Right ventricle myocardium inferior (tissue), 1 donor: ENCODE measurements at regions of chr17 and their contacts with region 1.

Region 1: GRCh38 chr17:7856883-7857723 is at the start of gene NAA38:
- DNase-seq: peak; percentile 97
- ATAC-seq: peak; percentile 91
- total RNA-seq, gene NAA38: 105 TPM

Region 2: GRCh38 chr17:7239091-7240027 is 617.7 kb before region 1 on chr17 and contains the start of gene PHF23:
- intact Hi-C with region 1: loop called (anchors 5 kb)
- DNase-seq: peak; percentile 100
- ATAC-seq: peak; percentile 85
- total RNA-seq, gene PHF23: 23.3 TPM

Region 3: DNA sequence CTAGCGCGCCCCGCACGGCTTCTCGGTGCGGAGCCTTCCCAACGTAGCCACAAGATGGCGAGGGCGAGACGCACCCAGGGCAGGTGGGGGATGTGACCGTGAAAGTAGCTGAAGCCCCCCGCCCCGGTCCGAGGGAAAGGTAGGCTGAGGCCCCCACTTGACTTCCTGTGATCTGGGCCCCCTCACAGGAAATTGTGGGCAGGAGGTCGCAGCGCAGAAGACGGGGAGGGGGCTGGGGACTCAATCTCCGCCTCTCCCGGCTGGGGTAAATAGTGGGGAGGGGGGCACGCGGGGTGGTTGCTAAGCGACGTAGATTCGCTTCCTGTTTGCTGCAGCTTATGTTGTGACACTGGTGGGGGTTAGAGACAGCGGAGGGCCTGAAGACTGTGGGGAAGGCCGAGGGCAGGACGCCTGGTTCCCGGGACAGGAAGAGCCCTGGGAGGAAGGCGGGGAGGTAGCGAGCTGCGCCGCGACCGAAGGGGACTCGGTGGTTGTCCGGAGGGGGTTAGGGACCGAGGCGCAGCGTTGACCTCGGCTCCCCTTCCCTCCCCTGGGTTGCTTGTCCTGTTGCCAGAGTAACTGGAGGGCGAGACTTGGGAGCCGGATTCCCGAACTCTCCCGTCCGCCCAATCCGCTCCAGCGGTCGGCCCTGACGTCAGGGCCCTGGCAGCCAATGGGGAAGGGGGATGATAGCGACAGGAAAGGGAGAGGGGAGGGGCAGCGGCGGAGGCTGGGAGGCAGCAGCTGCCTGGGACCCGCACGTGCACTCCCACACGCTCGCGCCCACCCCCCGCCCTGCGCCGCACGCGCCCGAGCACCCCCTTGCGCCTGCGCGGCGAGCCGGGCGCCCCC is 21.9 kb before region 1 on chr17:
- intact Hi-C with region 1: loop called (anchors 1 kb)
- DNase-seq: peak; percentile 99
- ATAC-seq: peak; percentile 77

Region 4: DNA sequence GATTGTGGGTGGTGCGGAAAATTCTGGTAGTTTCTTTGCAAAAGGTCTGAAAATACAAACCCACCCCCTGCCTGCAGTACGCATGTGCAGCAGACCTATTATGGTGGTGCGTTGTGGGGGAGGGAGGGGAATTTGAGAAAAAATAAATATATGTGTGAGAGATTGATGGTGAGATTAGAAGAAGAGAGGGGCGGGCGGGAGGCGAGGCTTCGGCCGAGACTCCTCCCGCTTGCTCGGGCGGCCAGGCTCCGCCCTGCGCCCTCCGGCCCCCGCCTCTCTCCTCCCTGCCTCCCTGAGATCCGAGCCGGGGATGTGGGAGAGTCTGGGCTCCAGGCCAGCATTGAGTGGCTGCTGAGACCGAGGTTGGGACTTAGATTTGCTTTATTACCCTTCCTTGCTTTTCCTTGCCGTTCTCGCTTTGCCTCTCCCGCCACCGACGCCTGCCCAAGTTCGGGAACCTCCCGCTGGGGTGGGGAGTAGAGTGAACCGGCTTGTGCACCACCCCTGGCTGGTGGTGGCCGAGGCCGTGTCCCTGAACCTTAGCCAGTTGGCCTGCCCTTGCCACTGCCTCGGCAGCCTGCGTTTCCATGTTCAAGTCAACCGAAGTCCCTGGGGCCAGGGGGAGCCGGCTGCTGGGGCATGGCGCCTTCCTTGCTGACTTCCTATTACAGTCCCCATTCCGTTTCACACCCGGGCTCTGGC is 30.5 kb after region 1 on chr17:
- intact Hi-C with region 1: loop called (anchors 2 kb)
- DNase-seq: peak; percentile 94
- ATAC-seq: peak; percentile 88

Region 5: GRCh38 chr17:8073627-8074484 is 216.8 kb after region 1 on chr17:
- intact Hi-C with region 1: no loop called
- DNase-seq: peak; percentile 87
- ATAC-seq: peak; percentile 59

Region 6: DNA sequence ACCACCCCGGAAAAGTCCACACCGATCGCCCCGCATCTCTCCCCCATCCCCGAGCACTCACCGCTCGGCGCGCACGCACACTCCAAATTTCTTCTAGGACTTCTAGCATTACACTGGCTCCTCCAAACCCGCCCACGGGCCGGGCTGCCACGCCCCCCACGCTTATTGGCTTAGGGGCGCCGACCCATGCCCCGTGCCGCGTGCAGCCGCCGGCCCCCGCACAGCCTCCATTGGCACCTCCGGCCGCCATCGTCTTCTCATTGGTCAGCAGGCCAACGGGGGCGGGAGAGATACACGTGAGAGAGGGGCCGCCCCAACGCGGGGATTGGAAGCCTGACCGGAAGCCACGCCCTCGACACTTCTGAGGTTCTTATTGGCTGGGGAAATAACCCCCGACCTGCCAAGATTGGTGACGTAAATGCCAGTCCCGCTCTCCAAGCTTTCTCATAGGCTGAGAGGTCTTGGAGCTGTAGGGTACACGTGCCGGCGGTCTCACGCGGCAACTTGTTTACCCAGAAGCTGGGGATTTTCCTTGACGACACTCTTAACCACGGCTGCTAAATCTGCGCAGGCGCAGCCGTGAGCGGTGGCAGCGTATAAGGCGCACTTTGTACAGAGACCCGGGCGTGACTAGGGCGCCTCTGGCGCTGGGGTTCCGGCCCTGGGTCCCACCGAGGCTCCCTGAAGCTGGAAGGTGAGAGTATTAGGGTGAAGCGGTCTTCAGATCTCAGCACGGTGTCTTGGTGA is 299.3 kb after region 1 on chr17:
- intact Hi-C with region 1: loop called (anchors 10 kb)
- DNase-seq: peak; percentile 100
- ATAC-seq: peak; percentile 66